Ascending aorta (tissue), 2 donors: ENCODE measurements at regions of chr6 and their contacts with region 1.

Region 1: DNA sequence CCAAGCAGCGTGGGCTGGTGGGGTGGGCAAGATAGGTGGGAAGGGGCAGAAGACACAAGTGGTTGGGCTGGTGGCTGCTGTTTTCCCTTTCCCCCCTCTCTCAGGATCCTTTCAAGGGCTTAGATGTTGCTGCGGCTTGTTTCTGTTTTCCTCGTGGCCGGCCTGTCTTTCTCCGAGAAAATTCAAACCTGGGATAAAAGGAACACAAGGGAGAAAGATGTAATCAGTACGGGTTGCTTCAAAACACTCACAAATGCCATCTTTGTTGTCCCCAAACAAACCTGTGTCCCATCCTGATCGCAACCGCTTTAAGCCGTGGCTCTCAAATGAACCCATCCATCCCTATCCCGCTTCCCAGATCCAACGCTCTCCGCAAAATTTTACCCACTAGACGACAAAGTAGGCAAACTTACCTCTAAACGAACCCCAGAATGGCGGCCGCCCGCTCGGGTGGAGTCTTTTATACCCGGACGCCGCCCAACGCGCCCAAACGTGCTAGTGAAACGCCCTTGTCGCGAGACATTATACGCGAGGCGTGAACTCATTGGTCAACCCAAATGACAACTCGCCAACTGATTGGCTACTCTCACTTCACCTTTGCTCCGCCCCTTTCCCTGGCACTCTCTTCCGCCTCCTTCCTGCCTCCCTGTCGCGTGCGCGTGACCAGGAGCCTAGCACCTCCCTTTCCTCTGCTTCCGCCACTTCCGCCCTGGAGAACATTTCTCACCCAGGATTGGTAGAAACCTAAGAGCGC is at the start of gene PPP1R10:
- DNase-seq: peak; percentile 97 to 100
- H3K4me3 ChIP-seq: peak within 1 kb of the TSS; percentile 77 to 94
- H3K27ac ChIP-seq: peak within 1 kb of the TSS; percentile 95 to 96
- H3K4me1 ChIP-seq: peaks cover 16 to 32% of the 10 kb centered on the region in 2 donors
- H3K27me3 ChIP-seq: no peaks in the 10 kb centered on the region
- CTCF ChIP-seq: no peak
- total RNA-seq, gene PPP1R10: 52.6 TPM

Region 2: DNA sequence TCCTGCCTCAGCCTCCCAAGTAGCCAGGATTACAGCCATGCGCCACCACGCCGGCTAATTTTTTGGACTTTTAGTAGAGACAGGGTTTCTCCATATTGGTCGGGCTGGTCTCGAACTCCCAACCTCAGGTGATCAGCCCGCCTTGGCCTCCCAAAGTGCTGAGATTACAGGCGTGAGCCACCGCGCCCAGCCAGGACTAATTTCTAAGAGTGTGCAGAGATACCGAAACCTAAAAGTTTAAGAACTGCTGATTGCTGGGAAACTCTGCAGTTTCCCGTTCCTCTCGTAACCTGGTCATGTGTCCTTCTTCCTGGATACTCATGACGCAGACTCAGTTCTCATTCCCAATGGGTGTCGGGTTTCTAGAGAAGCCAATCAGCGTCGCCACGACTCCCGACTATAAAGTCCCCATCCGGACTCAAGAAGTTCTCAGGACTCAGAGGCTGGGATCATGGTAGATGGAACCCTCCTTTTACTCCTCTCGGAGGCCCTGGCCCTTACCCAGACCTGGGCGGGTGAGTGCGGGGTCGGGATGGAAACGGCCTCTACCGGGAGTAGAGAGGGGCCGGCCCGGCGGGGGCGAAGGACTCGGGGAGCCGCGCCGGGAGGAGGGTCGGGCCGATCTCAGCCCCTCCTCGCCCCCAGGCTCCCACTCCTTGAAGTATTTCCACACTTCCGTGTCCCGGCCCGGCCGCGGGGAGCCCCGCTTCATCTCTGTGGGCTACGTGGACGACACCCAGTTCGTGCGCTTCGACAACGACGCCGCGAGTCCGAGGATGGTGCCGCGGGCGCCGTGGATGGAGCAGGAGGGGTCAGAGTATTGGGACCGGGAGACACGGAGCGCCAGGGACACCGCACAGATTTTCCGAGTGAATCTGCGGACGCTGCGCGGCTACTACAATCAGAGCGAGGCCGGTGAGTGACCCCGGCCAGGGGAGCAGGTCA is 127.6 kb before region 1 on chr6 and contains the start of gene HLA-E:
- intact Hi-C with region 1: loop called (anchors 5 kb)
- DNase-seq: peak; percentile 90 to 99
- H3K4me3 ChIP-seq: peak within 1 kb of the TSS; percentile 91 to 97
- H3K27ac ChIP-seq: peak within 1 kb of the TSS; percentile 98 to 99
- H3K4me1 ChIP-seq: peaks cover 6 to 14% of the 10 kb centered on the region in 2 donors
- H3K27me3 ChIP-seq: no peaks in the 10 kb centered on the region
- CTCF ChIP-seq: no peak
- total RNA-seq, gene HLA-E: 896 TPM

Region 3: DNA sequence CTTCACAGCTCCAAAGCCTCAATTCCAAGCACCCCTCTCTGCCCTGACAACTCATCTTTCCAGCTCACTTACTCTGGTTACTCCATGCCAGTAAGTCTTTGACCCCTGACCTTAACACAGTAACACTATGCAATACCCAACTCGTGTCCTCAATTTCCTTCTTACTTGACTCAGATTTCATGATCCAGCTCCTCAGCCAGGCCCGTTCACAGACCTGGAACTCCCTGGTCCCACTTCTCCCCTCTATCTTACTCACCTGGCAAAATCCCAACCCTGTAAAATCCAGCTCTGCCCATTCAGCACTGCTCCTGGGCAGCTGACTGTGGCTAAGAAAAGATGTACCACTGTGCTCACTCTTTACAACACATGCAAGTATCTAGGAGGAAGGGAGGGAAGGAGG is 68.6 kb before region 1 on chr6:
- intact Hi-C with region 1: no loop called
- DNase-seq: peak in 1 of 2 donors; percentile 53
- H3K4me3 ChIP-seq: no peak overlapping the region
- H3K27ac ChIP-seq: no peak overlapping the region
- H3K4me1 ChIP-seq: no peaks in the 10 kb centered on the region
- H3K27me3 ChIP-seq: no peaks in the 10 kb centered on the region
- CTCF ChIP-seq: no peak

Region 4: DNA sequence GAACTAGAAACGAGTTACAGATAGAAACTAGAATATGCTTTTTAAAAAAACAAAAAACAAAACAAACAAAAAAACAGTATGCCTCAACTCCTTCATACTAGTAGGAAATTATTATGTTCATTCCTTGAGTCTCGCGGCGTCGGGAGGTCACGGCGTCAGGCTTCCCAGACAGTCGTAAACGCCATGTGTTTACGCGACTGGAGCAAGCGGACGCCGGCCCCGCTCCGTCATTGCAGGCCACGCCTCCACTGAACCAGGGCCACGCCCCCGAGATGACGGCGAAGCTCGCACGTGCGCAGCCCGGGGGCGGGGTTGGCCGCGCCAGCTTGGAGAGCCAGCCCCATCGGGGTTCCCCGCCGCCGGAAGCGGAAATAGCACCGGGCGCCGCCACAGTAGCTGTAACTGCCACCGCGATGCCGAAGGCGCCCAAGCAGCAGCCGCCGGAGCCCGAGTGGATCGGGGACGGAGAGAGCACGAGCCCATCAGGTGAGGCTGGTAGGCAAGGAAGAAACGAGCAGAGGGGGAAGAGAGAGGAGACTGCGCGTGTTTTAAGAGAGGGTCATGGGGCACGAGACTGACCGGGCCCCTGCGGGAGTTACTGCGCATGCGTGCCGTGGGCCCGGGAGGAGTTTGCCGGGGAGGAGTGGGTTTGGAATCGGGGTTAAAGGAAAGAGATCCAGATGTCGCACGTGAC is 45.8 kb before region 1 on chr6 and contains the start of gene ABCF1:
- intact Hi-C with region 1: loop called (anchors 2 kb)
- DNase-seq: peak; percentile 89 to 99
- H3K4me3 ChIP-seq: peak within 1 kb of the TSS; percentile 72 to 91
- H3K27ac ChIP-seq: peak within 1 kb of the TSS; percentile 89 to 92
- H3K4me1 ChIP-seq: peaks cover 9 to 19% of the 10 kb centered on the region in 2 donors
- H3K27me3 ChIP-seq: no peaks in the 10 kb centered on the region
- CTCF ChIP-seq: no peak
- total RNA-seq, gene ABCF1: 36.6 TPM

Region 5: DNA sequence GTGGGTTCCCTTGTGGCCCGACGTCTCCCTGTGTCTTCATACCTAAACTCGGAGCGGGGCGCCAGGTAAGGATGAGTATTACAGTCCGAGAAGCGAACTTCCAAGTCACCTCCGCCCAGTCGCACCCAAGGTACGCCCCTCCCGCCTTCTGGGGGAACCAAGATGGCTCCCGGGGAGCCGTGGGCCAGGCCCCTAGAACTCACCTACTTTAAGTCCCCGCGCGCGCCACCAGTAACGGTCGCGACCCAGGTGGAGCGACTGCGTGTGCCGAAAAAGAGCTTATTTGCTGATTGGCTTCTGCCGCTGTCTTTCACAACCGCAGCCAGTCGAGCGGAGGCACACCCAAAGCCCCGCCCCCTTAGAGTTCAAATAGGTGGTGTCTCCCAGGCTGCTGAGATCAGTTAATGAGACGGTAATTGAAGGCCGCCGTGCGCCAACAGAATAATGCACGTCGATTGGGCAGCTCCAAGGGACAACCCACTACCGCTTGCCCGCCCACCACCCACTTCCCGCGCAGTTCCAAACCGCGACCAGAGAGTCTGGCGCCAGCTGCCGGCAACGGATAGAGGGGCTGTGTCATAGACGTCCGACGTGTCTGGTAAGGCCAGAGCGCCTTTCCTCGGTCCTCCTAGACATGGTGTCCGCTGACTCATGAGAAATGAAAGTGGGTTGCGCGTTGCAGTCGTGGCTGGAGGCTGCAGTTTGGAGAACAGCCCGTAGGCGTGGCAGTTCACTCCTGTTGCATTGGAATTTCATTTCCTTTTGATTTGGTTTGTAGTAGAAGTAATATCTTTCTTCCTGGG is 100.3 kb after region 1 on chr6 and contains the start of gene MDC1:
- intact Hi-C with region 1: loop called (anchors 1 kb)
- DNase-seq: peak; percentile 100
- H3K4me3 ChIP-seq: peak within 1 kb of the TSS; percentile 69 to 77
- H3K27ac ChIP-seq: peak within 1 kb of the TSS; percentile 93 to 94
- H3K4me1 ChIP-seq: peaks cover 0 to 24% of the 10 kb centered on the region in 2 donors
- H3K27me3 ChIP-seq: no peaks in the 10 kb centered on the region
- CTCF ChIP-seq: peak in 1 of 3 experiments; percentile 65
- total RNA-seq, gene MDC1: 27.1 TPM

Region 6: GRCh38 chr6:31403283-31403989 is 786.4 kb after region 1 on chr6 and contains the start of gene MICA:
- intact Hi-C with region 1: loop called (anchors 5 kb)
- DNase-seq: peak; percentile 74 to 96
- H3K4me3 ChIP-seq: peak within 1 kb of the TSS; percentile 68 to 76
- H3K27ac ChIP-seq: peak within 1 kb of the TSS; percentile 92 to 95
- H3K4me1 ChIP-seq: peaks cover 12 to 26% of the 10 kb centered on the region in 2 donors
- H3K27me3 ChIP-seq: no peaks in the 10 kb centered on the region
- CTCF ChIP-seq: peak in 2 of 3 experiments; percentile 24 to 39
- total RNA-seq, gene MICA: 19.2 TPM

Region 7: DNA sequence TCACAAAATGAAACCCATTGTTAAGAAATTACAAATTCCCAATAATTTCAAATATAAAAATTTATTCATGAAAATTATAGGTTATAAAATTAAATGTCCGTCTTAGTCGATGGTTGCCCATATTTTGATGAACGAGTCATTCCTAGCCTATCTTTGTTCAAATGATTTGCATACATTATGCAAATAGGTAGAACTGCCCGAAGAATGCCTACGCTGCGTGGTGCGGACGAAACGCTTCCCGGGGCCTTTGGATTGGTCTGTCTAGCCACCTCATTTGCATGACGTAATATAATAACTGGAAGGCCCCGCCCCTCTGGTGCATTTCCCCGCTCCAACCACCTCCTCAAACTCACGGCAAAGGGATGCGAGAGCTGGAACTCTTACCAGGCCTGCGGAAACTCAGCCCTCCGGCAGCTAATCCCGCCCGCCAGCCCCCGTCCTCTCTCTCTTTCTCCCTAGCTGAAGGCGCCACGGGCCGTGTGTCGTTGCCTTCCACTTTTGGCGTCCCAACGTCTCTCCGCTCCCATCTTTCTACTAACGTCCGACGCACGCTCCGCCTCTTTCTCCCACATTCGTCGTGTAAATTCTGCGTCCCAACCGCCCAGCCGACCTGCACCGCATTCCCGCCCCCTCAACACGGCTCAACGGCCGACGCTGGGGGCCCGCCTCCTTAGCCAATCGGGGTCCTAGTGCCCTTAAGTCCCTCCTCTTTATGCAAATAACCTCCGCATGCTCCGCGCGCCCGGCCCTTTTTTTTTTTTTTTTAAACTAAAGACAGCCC is 1003.0 kb after region 1 on chr6:
- intact Hi-C with region 1: loop called (anchors 5 kb)
- DNase-seq: peak; percentile 97 to 99
- H3K4me3 ChIP-seq: peak overlapping the region; percentile 76 to 93
- H3K27ac ChIP-seq: peak overlapping the region; percentile 98 to 99
- H3K4me1 ChIP-seq: peaks cover 8 to 9% of the 10 kb centered on the region in 2 donors
- H3K27me3 ChIP-seq: no peaks in the 10 kb centered on the region
- CTCF ChIP-seq: no peak